Heart right ventricle (tissue), 16 donors: ENCODE measurements at regions of chr16 and their contacts with region 1.

Region 1: DNA sequence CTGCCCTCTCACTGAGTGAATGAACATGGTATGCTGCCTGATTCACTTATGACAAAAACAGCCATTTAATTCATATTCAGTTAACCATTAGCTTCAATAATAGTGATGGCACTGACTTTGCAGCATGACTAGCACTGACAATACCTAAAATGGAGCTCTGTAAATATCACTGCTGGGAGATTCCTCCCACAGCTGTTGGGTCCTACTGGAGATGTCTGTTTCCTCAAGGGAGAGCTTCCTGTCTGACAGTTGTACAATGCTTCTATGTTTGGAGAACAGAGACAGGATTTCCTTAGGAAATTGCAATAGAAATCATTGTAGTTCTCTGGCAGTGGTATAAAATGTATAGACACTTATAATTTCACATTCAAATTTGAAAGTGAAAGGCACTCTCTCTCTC is 695.9 kb upstream of the CDH8 start:
- DNase-seq: no peak
- ATAC-seq: peak in 1 of 8 donors; percentile 44
- H3K4me3 ChIP-seq: no peak overlapping the region
- H3K27ac ChIP-seq: no peak overlapping the region
- H3K4me1 ChIP-seq: no peaks in the 10 kb centered on the region
- H3K27me3 ChIP-seq: no peaks in the 10 kb centered on the region
- CTCF ChIP-seq: no peak

Region 2: GRCh38 chr16:62711797-62712196 is 20.3 kb before region 1 on chr16:
- intact Hi-C with region 1: loop called in 1 of 10 experiments (anchors 1 kb)
- DNase-seq: no peak
- ATAC-seq: no peak
- H3K4me3 ChIP-seq: no peak overlapping the region
- H3K27ac ChIP-seq: no peak overlapping the region
- H3K4me1 ChIP-seq: no peaks in the 10 kb centered on the region
- H3K27me3 ChIP-seq: no peaks in the 10 kb centered on the region
- CTCF ChIP-seq: no peak